ENCODE measurements at regions of chr10 and their contacts with region 1.

Region 1: DNA sequence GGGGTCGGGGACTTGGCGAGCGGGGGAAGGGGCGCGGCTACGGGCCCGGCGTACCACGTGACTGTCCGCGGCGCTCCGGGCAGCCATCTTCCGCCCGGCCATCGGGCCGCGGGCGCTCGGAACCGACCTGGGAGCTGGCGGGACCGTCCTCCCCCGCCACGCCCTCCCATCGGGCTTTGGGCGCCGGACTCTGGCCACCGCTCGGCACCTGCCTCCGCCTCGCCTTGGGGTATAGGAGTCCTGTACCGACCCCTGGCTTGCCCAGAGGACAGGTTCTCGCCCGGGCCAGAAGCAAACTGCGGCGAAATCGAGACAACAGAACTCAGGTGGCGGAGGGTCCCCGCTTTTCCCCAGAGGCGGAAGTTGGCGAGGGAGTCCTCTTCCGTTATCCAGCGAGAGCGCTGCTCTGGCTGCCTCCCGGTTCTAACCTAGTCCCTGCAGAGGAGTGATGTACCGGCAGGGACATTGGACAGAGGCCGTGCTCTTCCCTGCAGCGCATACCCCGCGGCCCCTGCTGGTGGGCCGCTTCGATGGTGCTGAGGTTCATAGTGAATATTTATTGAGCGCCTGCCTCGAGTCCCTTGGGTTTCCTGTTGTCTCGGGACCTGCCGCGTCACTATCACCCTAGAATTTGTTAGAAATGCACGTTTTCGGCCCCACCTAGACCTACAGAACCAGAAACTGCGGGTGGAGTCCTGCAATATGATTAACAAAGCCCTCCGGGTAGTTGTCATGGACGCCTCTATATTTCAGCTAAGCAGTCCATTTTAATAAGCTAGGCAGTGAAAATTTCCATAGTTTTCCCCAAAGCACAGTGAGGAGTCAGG is 1.3 kb upstream of the SGMS1 start:
- DNase-seq: peak; percentile 84
- H3K4me3 ChIP-seq: peak overlapping the region; percentile 79 to 96
- H3K27ac ChIP-seq: peak overlapping the region; percentile 99 to 100
- H3K4me1 ChIP-seq: peaks cover 6% of the 10 kb centered on the region
- H3K27me3 ChIP-seq: no peaks in the 10 kb centered on the region
- CTCF ChIP-seq: peak; percentile 38 to 63 (median 60)
- POLR2A ChIP-seq: no peak

Region 2: DNA sequence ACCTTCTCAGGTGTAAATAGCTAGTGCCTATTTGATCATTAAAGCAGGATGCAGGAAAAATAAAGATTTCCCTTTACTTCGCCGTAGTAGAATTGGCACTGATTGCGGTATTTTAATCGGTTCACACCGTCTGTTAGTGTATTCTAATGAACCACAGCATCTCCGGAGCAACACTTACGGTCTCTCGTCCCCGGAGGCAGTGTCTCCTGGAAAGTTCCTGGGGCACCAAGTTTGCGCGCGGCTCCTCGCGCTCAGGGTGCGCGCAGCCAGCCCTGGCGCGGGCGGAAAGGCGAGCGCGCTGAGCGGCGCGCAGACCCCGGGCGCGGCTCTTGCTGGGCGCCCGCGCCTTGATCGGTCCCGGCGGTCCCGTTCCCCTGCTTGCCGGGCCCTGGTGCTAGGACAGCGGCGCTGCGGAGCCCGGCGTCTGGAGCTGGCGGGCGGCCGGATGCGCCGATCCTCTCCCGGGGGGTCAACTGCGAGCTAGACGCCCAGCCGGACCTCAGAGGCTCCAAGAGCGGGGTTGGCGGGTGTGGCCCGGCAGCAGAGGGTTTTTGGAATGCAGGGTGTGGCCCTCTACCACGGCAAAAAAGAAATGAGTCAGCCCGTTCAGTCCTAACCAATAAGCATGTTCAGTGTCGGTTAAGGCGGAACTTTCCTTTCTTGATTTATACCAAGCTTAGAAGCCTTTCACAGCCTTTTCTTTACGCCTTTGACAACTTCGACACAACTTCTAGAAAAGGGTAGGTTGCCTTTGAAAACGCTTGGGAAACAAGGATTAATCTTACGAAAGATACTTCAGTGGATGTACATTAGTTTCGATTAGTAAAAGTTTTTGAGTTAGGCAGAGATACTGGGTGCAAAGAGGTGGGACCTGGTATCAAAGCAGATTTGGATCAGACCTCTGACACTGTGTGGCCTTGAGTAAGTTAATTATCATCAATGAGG is 206.9 kb before region 1 on chr10:
- intact Hi-C with region 1: loop called (anchors 10 kb)
- DNase-seq: peak; percentile 50
- H3K4me3 ChIP-seq: peak overlapping the region; percentile 71 to 72
- H3K27ac ChIP-seq: peak overlapping the region; percentile 68 to 75
- H3K4me1 ChIP-seq: peaks cover 6% of the 10 kb centered on the region
- H3K27me3 ChIP-seq: no peaks in the 10 kb centered on the region
- CTCF ChIP-seq: no peak
- POLR2A ChIP-seq: no peak

Region 3: GRCh38 chr10:50561816-50562215 is 63.3 kb before region 1 on chr10:
- intact Hi-C with region 1: no loop called
- DNase-seq: no peak
- H3K4me3 ChIP-seq: no peak overlapping the region
- H3K27ac ChIP-seq: peak overlapping the region in 1 of 2 donors; percentile 36
- H3K4me1 ChIP-seq: peaks cover 14% of the 10 kb centered on the region
- H3K27me3 ChIP-seq: no peaks in the 10 kb centered on the region
- CTCF ChIP-seq: peak in 2 of 3 experiments; percentile 27 to 45
- POLR2A ChIP-seq: no peak

Region 4: DNA sequence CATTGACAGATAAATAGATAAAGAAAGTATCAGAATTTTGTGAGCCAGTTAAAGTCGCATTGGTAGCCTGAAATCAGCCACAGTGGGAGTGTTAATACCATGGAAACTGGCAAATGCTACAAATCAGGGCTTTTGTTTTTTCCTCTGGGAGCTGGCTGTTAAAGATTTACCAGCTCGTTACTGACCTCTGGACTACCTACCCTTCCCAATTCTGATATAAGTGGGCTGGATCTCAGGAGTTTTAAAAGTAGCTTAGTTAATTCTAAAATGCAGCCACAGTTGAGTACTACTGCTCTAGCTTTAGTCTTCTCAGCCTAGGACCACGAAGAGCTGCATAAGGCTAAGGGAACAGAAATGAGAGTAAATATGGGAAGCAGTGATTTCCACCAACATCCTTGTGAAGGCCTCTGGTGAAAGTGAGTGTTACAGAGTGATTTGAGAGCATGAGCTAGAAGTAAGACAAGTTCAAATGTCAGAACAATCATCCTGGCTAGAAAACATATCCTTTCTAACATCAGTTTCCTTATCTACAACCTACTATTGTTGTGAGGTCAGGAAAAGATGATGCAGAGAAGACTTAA is 207.2 kb after region 1 on chr10:
- intact Hi-C with region 1: no loop called
- DNase-seq: no peak
- H3K4me3 ChIP-seq: no peak overlapping the region
- H3K27ac ChIP-seq: no peak overlapping the region
- H3K4me1 ChIP-seq: no peaks in the 10 kb centered on the region
- H3K27me3 ChIP-seq: no peaks in the 10 kb centered on the region
- CTCF ChIP-seq: no peak
- POLR2A ChIP-seq: no peak

Measured in testis (tissue), 5 donors.